Activated CD4-positive, alpha-beta memory T cell treated with anti-CD3 and anti-CD28 coated beads for 36 hours (primary cell): ENCODE measurements at regions of chr7 and their contacts with region 1.

Region 1: GRCh38 chr7:27210441-27211083 is 10.7 kb upstream of the HOXA13 start:
- DNase-seq: peak; percentile 63
- H3K4me3 Mint-ChIP-seq: no peak overlapping the region
- H3K27ac Mint-ChIP-seq: no peak overlapping the region
- H3K4me1 Mint-ChIP-seq: peaks cover 14% of the 10 kb centered on the region
- H3K27me3 Mint-ChIP-seq: peaks cover 86% of the 10 kb centered on the region

Region 2: DNA sequence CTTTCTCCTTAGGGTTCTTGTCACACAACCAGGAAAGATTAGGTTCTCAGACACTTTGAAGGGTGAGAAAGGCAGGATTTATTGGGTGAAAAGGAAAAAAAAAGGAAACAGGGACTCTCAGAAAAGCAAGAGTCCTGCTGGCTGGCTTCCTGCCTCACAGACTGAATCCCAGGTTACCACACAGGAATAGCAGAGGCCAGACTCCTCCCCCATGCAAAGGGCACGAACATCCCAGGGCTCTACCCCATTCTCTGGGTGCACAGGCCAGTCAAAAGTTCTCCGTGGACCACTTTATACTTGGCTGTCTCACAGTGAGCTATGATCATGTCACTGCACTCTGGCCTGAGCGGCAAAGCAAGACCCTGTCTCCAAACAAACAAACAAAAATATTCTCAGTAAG is 157.4 kb before region 1 on chr7:
- CTCF ChIA-PET with region 1: no interaction called
- POLR2A ChIA-PET with region 1: no interaction called
- intact Hi-C with region 1: no loop called
- DNase-seq: no peak
- H3K4me3 Mint-ChIP-seq: no peak overlapping the region
- H3K27ac Mint-ChIP-seq: no peak overlapping the region
- H3K4me1 Mint-ChIP-seq: no peaks in the 10 kb centered on the region
- H3K27me3 Mint-ChIP-seq: peaks cover 3% of the 10 kb centered on the region

Region 3: DNA sequence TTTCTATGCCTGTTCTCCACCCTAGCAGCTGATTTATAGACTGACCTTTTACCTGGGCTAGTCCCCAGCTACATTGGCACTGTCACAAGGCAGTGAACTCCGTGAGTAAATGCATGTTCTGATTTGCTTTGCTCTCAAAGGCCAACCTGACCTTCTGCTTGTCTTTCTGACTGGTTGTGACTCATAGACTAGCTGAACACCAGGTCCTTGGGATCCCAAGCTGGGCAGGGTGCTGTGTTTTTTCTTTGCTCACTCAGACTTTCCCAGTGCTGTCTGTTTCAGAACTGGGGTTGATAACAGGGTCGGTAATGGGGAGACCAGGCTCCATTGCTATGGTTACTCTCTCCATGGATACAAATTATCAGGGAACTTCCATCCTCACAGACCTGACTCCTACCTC is 67.1 kb after region 1 on chr7:
- CTCF ChIA-PET with region 1: no interaction called
- POLR2A ChIA-PET with region 1: no interaction called
- intact Hi-C with region 1: no loop called
- DNase-seq: no peak
- H3K4me3 Mint-ChIP-seq: no peak overlapping the region
- H3K27ac Mint-ChIP-seq: no peak overlapping the region
- H3K4me1 Mint-ChIP-seq: no peaks in the 10 kb centered on the region
- H3K27me3 Mint-ChIP-seq: peaks cover 3% of the 10 kb centered on the region

Region 4: DNA sequence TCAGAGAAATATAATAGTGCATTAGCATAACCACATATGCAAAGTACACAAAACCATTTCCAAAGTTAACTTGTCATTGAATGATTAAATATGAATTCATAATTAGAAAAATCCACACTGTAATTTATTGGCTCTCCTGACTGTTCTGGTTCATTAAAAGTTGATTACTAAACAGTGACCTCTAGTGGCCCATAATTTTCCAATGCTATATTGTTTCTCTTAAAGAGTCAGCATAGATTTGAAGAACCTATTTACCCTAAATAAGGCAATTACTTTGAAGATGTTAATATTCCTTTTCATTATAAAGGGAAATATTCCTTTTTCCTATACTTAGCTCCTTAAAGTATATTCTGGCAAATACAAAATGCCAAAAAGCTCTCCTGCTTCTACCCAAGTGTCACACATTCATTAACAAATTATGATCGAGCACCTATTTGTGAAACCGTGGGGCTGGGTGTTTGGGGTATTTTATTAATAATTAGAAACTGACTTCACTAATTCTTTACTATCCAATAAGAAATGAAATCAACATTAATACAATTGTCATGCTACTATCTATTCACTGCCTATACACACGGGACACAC is 365.9 kb after region 1 on chr7:
- CTCF ChIA-PET with region 1: interaction called, 8 read pairs
- POLR2A ChIA-PET with region 1: no interaction called
- intact Hi-C with region 1: loop called (anchors 2 kb)
- DNase-seq: no peak
- H3K4me3 Mint-ChIP-seq: no peak overlapping the region
- H3K27ac Mint-ChIP-seq: no peak overlapping the region
- H3K4me1 Mint-ChIP-seq: no peaks in the 10 kb centered on the region
- H3K27me3 Mint-ChIP-seq: no peaks in the 10 kb centered on the region

Region 5: DNA sequence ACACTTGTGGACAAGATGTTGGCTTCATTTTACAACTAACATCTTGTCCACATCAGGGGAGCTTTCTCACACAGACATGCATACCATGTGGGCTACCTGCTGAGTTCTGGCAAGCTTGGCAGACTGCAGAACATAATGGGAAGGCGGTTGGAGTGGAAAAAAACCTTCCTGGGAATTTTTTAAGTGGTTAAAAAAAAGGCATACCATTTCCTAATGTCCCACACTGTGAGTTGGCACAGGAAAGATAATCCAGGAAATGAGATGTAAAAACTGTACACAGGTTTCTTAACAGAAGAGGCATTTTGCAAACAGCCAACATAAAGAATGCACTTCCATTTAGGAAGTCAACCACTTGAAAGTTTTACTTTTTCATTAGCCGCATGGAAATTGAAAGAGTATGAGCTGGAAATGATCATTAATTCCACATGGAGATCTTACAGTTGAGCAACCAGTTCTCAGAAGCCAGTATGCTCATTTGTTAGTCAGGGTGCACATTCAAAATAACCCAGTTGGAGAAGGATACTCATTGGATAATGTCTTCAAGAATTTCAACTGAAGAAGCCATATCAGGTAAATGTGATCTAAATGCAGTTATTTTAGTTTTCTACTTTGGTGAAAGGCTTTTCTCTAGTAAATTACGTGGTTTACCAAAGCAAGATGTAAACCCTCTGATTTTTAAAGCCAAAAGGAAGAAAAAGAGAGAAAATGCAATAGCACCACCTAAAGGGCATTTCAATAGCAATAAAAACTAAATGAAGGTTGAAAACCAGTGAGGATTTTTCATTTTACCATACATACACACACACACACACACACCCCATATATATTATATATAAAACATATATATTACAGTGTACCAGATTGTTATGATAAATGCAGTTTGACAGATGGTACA is 723.4 kb after region 1 on chr7:
- CTCF ChIA-PET with region 1: no interaction called
- POLR2A ChIA-PET with region 1: no interaction called
- intact Hi-C with region 1: loop called (anchors 5 kb)
- DNase-seq: no peak
- H3K4me3 Mint-ChIP-seq: no peak overlapping the region
- H3K27ac Mint-ChIP-seq: no peak overlapping the region
- H3K4me1 Mint-ChIP-seq: no peaks in the 10 kb centered on the region
- H3K27me3 Mint-ChIP-seq: no peaks in the 10 kb centered on the region